ENCODE measurements at regions of chr3 and their contacts with region 1.

Region 1: DNA sequence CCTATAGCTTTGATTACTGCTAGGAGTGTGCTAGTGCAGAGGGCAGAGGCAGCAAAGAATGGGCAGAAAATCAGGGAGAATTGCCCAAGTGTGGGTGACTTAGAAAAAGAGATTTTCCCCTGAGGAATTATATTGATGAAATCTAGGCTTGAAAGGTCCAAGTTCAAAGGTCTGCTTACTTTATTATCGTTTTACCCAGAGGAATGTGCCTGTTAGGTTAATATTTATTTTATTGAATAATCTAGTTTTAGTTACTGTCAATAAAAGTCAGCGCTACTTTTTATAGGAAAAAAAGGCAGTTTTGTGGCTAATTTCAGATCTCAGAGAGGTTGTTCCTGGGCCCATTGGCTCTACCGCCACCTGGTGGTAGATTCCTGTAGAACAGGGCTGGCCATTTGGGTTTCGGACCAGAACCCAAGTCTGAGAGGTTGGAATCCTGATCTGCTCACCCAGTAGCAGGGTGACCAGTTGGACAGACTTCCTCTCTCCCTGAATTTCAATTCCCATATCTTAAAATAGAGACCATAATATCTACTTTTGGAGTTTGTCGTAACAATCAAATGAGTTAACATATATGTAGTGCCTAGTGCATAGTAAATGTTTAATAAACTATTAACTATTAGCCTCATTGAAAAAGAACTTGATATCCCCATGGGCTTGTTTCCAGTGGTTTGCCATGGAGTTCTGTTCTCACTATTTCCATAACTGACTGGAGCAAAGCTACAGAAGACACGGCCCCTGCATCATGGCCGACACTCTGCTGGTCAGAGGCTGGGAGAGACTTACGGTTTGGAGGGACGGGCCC is 62.7 kb upstream of the ZNF148 start:
- DNase-seq: peak; percentile 29 to 44
- ATAC-seq: peak in 7 of 8 donors; percentile 34 to 69 (median 62)
- H3K4me3 ChIP-seq: no peak overlapping the region
- H3K27ac ChIP-seq: no peak overlapping the region
- H3K4me1 ChIP-seq: no peaks in the 10 kb centered on the region
- H3K27me3 ChIP-seq: no peaks in the 10 kb centered on the region
- CTCF ChIP-seq: peak in 8 of 9 donors; percentile 92 to 98 (median 96)

Region 2: GRCh38 chr3:124928333-124929202 is 509.3 kb before region 1 on chr3:
- intact Hi-C with region 1: loop called (anchors 1 to 10 kb)
- DNase-seq: peak; percentile 31 to 68
- ATAC-seq: peak in 7 of 8 donors; percentile 42 to 84 (median 68)
- H3K4me3 ChIP-seq: no peak overlapping the region
- H3K27ac ChIP-seq: no peak overlapping the region
- H3K4me1 ChIP-seq: peaks cover 0 to 13% (median 0%) of the 10 kb centered on the region in 9 donors
- H3K27me3 ChIP-seq: no peaks in the 10 kb centered on the region
- CTCF ChIP-seq: peak; percentile 57 to 85 (median 77)

Region 3: DNA sequence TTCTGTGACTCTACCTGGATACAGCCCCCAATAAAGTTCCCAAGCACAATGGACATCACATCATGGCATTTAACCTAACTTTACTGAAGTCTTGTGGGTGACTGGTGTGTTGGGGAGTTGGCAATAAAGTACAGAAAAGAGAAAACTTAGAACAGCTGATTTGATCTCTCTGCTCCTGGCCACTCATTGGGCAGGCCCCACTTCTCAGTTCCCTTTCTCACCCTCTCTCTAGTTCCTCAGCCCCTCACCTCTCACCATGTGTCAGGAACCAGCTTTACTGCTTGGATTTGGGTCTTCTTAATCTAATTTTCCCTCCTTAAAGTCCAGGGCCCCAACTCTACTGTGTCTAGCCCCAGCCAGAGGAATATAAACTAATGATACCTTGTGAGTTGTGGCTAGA is 502.6 kb before region 1 on chr3:
- intact Hi-C with region 1: loop called in 2 of 10 experiments (anchors 2 to 5 kb)
- DNase-seq: no peak
- ATAC-seq: no peak
- H3K4me3 ChIP-seq: no peak overlapping the region
- H3K27ac ChIP-seq: no peak overlapping the region
- H3K4me1 ChIP-seq: no peaks in the 10 kb centered on the region
- H3K27me3 ChIP-seq: no peaks in the 10 kb centered on the region
- CTCF ChIP-seq: no peak

Region 4: DNA sequence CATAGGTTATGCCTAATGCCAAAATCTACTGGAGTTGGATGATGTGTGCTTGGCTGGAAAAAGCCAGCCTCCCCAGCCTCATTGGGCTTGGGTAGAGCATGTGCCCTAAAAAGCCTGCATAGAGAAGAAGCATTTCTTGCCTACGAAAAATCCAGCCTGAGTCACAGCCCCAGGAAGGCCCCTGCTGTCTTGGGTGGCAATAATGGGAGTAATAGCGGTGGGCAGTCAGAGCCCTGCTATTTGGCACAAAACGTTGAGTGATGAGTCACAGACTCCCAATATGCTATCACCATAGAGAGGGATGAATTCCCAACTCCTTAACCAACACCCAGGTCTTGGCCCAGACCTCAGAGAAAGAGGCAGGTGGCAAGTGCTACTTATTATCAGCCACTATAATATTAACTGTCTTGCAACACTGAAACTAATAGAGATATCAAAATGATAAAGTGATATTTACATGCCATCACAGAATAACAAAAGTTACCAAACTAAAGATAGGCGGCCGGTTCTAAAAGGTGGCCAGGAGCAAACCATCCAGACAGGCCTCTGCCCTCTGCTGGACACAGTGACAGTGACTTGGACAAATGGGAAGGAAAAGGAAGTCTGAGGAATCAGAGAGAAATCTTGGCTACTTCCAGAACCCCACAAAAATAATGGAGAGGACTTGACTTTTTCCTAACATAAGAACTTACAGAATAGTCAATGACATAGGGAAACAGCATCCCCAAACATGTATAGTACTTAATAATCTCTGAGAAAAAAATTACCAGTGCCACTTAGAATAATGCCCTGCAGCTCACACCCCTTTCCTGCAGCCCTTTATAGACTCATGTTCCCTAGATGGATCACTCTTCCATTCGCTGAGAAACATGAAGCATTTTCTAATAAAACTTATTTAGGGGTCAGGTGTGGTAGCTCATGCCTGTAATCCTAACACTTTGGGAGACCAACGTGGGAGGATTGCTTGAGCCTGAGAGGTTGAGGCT is 451.4 kb before region 1 on chr3:
- intact Hi-C with region 1: loop called in 2 of 10 experiments (anchors 5 to 10 kb)
- DNase-seq: no peak
- ATAC-seq: peak in 7 of 8 donors; percentile 16 to 50 (median 41)
- H3K4me3 ChIP-seq: no peak overlapping the region
- H3K27ac ChIP-seq: peak overlapping the region in 8 of 10 donors; percentile 42 to 75 (median 68)
- H3K4me1 ChIP-seq: peaks cover 2 to 50% (median 45%) of the 10 kb centered on the region in 9 donors
- H3K27me3 ChIP-seq: no peaks in the 10 kb centered on the region
- CTCF ChIP-seq: peak in 7 of 9 donors; percentile 36 to 62 (median 49)

Region 5: DNA sequence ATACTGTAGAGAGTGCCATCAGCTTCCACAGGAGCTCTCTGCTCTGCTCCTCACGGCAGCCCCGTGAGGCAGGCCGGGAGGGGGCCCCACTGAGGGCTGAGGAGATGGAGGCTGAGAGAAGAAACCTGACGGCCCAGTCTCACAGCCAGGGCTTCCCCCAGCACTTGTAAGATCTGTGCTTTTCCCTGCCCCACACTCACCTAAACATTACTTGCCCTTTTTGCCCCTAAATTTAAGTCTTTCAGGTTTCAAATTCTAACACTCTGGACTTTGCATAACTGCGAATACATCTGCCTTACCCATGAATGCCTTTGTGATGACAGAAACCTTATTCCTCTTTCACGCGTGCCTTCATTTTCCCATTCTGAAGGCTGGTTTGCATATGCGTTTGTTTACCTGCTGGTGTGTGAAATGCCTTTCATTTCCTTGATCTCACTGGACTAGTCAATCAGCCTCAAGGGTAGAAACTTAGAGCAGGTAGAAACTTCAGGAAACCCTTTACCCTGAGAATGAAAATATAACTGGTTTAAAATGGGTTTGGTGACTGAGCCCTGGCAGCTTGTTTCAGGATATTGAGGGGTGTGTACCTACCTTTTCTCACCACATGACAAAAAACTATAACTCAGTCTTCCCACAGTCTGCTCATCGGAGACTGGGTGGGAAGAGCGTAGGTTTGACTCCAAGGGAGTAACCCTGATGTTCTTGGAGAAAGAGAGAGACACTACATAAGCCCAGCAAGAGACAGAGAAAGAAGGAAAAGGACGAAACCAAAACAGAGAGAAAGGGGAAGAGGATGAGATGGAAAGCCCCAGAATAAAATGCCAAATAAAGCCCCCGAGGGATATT is 245.4 kb before region 1 on chr3:
- intact Hi-C with region 1: loop called in 1 of 10 experiments (anchors 10 kb)
- DNase-seq: no peak
- ATAC-seq: no peak
- H3K4me3 ChIP-seq: no peak overlapping the region
- H3K27ac ChIP-seq: no peak overlapping the region
- H3K4me1 ChIP-seq: no peaks in the 10 kb centered on the region
- H3K27me3 ChIP-seq: no peaks in the 10 kb centered on the region
- CTCF ChIP-seq: no peak

Region 6: GRCh38 chr3:125271127-125271526 is 166.7 kb before region 1 on chr3:
- intact Hi-C with region 1: no loop called
- DNase-seq: no peak
- ATAC-seq: no peak
- H3K4me3 ChIP-seq: no peak overlapping the region
- H3K27ac ChIP-seq: no peak overlapping the region
- H3K4me1 ChIP-seq: peaks cover 0 to 12% (median 0%) of the 10 kb centered on the region in 9 donors
- H3K27me3 ChIP-seq: no peaks in the 10 kb centered on the region
- CTCF ChIP-seq: no peak

Region 7: GRCh38 chr3:125670945-125671344 is 233.1 kb after region 1 on chr3:
- intact Hi-C with region 1: no loop called
- DNase-seq: no peak
- ATAC-seq: no peak
- H3K4me3 ChIP-seq: no peak overlapping the region
- H3K27ac ChIP-seq: no peak overlapping the region
- H3K4me1 ChIP-seq: no peaks in the 10 kb centered on the region
- H3K27me3 ChIP-seq: no peaks in the 10 kb centered on the region
- CTCF ChIP-seq: no peak

Measured in heart right ventricle (tissue), 16 donors.